ENCODE measurements at regions of chr2 and their contacts with region 1.

Region 1: GRCh38 chr2:30239308-30239985 is 8.1 kb downstream of the LBH start:
- DNase-seq: peak; percentile 79
- ATAC-seq: peak; percentile 35
- H3K4me3 Mint-ChIP-seq: peak overlapping the region; percentile 0
- H3K27ac Mint-ChIP-seq: peak overlapping the region; percentile 50
- H3K4me1 Mint-ChIP-seq: peaks cover 79% of the 10 kb centered on the region
- H3K27me3 Mint-ChIP-seq: no peaks in the 10 kb centered on the region

Region 2: GRCh38 chr2:30225131-30225762 is 14.2 kb before region 1 on chr2:
- CTCF ChIA-PET with region 1: interaction called, 35 read pairs
- DNase-seq: peak; percentile 74
- ATAC-seq: peak; percentile 88
- H3K4me3 Mint-ChIP-seq: peak overlapping the region; percentile 90
- H3K27ac Mint-ChIP-seq: peak overlapping the region; percentile 98
- H3K4me1 Mint-ChIP-seq: peaks cover 51% of the 10 kb centered on the region
- H3K27me3 Mint-ChIP-seq: peaks cover 5% of the 10 kb centered on the region

Region 3: DNA sequence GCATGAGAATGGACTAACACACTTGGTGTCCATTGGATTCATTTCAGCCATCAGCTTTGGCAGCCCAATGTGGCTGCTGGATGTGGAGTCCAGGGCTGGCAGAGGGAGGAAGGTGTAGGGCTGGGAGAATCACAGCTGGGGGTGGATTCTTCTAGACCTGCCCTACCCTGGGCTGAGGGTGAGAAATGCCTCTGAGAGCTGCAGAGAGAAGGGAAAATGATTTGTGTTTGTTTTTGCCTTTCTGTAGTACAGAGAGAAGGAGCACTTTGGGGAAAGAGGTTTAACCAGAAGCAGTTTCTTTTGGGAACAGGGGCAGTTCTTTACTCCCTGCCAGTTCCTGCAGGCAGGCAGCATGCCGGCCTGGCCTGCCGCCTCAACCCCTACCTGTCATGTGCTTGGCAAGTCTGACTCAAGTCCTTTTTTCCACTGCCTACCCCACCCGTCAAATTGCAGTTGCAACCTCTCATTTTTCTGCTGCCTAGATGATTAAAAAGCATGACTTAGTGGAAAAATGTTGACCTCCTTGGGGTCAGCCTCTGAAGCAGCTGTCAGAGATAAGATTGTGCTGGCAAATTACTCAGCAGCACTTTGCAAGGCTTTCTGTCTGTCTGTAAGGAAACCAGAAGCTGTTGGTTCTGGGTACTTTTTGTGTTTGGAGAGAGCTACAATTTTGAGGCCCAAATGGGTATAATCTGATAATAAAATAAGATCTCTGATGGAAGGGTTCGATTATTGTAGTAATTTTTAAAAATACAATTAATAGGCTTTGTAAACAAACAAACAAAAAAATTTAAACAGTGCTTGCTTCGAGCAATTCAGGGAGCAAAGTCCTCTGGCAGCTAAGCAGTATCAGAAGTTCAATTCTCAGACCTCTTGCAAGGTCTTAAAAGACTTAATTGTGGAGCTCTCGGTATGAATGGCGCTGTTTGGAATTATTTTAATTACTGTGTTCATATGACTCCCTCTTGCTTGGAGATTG is 13.6 kb after region 1 on chr2:
- CTCF ChIA-PET with region 1: interaction called, 38 read pairs
- DNase-seq: peak; percentile 80
- ATAC-seq: peak; percentile 86
- H3K4me3 Mint-ChIP-seq: no peak overlapping the region
- H3K27ac Mint-ChIP-seq: peak overlapping the region; percentile 78
- H3K4me1 Mint-ChIP-seq: peaks cover 77% of the 10 kb centered on the region
- H3K27me3 Mint-ChIP-seq: no peaks in the 10 kb centered on the region

Region 4: DNA sequence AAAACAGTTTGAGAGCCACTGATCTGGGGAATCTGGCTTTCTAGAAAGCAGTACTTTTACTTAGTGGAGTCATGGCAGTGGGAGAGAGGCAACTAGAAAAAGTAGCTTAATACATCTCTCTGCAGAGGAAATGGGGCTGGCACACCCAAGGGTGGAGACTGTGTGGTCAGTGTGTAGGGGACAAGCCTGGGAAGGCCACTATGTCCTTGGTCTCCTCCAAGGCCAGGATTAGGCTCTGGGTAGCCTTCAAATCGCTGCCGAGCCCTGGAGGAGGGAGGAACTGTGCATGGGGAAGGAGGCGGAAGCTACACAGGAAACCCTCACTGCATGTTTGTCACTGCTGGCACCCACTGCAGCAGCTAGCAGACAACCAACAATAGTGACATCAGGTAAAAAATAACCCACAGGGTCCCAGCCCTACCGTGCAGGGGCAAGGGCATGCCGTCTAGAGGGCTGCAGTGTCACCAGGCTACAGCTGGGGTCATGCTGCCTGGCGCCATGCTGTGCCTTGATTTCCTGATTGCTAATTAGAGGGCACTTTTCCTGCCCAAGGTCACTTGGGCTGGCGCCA is 26.7 kb after region 1 on chr2:
- CTCF ChIA-PET with region 1: interaction called, 13 read pairs
- DNase-seq: peak; percentile 79
- ATAC-seq: peak; percentile 82
- H3K4me3 Mint-ChIP-seq: peak overlapping the region; percentile 75
- H3K27ac Mint-ChIP-seq: peak overlapping the region; percentile 95
- H3K4me1 Mint-ChIP-seq: peaks cover 51% of the 10 kb centered on the region
- H3K27me3 Mint-ChIP-seq: no peaks in the 10 kb centered on the region

Measured in activated CD8-positive, alpha-beta memory T cell treated with anti-CD3 and anti-CD28 coated beads, Interleukin-2, amount 10 ng/mL, durations not matched to agents 7 days and 5 days (primary cell).